ENCODE measurements at regions of chr18 and their contacts with region 1.

Region 1: GRCh38 chr18:23586249-23587196 is at the start of gene NPC1:
- DNase-seq: peak; percentile 92
- H3K4me3 Mint-ChIP-seq: peak within 1 kb of the TSS; percentile 94
- H3K27ac Mint-ChIP-seq: peak within 1 kb of the TSS; percentile 93
- H3K4me1 Mint-ChIP-seq: peaks cover 42% of the 10 kb centered on the region
- H3K27me3 Mint-ChIP-seq: peaks cover 3% of the 10 kb centered on the region
- total RNA-seq, gene NPC1: 30.1 and 30.2 TPM in 2 replicates

Region 2: DNA sequence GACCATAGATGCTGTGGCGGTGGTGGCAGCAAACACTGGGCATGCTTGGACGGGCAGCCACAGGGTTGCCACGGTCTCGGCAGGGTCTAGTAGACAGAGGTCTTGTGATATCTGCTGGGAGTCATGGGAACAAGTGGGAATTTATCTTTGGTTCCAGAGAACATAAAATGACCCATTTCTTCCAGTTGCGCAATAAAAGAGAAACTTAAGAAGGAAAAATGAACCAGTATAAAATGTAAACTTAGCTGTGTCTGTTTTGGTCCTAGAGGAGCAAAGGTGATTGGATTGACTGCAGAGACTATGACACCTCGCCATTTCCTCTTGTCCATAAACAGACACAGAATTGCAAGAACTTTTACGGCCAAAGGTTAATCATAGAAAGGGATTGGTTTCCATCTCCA is 786.0 kb before region 1 on chr18:
- intact Hi-C with region 1: loop called (anchors 2 kb)
- DNase-seq: no peak
- H3K4me3 Mint-ChIP-seq: no peak overlapping the region
- H3K27ac Mint-ChIP-seq: no peak overlapping the region
- H3K4me1 Mint-ChIP-seq: no peaks in the 10 kb centered on the region
- H3K27me3 Mint-ChIP-seq: peaks cover 17% of the 10 kb centered on the region

Region 3: DNA sequence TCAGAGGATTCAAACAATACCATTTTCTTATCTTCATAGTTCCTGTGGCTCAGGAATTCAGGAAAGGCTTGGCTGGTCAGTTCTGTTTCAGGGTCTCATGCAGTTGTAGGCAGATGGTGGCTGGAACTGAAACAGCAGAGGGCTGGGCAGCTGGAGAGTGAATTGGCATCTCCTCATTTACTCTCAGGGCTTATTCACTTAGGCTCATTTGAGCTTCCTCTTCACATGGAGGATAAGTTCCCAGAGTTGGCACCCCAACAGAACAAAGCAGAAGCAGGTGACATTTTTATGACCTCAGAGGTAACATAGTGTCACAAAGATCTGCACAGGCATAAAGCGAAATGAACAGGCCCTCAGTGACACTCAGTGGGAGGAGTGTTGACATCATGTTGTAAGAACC is 587.3 kb before region 1 on chr18:
- intact Hi-C with region 1: no loop called
- DNase-seq: no peak
- H3K4me3 Mint-ChIP-seq: no peak overlapping the region
- H3K27ac Mint-ChIP-seq: no peak overlapping the region
- H3K4me1 Mint-ChIP-seq: peaks cover 7% of the 10 kb centered on the region
- H3K27me3 Mint-ChIP-seq: no peaks in the 10 kb centered on the region

Region 4: GRCh38 chr18:23437357-23438045 is 149.0 kb before region 1 on chr18:
- intact Hi-C with region 1: loop called (anchors 5 kb)
- DNase-seq: peak; percentile 74
- H3K4me3 Mint-ChIP-seq: peak overlapping the region; percentile 86
- H3K27ac Mint-ChIP-seq: peak overlapping the region; percentile 44
- H3K4me1 Mint-ChIP-seq: peaks cover 22% of the 10 kb centered on the region
- H3K27me3 Mint-ChIP-seq: peaks cover 2% of the 10 kb centered on the region

Region 5: DNA sequence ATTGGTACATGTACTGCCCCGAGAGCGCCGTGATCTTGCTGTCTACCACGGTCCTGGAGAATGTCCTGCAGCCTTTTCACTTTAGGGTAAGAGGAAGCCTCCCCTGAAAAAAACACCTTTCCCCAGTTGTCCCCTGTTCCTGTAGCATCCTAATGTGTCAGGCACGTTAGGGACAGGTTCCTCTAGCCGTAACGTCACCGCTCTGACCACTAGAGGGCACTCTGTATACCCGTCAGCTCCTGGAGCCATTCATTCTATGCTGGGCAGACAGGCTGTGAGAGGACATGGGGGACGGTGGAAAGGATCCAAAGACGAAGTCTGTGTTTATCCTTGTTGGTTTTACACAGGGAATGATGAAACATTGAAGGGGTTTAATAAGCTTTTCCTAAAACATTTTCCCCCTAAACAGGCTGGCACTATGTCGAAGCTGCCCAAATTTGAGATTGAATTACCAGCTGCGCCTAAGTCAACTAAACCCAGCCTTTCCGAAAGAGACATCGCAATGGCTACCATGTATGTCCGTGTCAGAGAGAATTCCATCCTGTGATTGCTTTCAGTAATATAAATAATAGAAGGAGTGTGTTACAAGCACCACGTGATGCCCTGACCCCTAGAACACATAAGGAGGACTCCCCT is 70.5 kb before region 1 on chr18:
- intact Hi-C with region 1: loop called (anchors 1 kb)
- DNase-seq: peak; percentile 61
- H3K4me3 Mint-ChIP-seq: no peak overlapping the region
- H3K27ac Mint-ChIP-seq: peak overlapping the region; percentile 3
- H3K4me1 Mint-ChIP-seq: peaks cover 35% of the 10 kb centered on the region
- H3K27me3 Mint-ChIP-seq: no peaks in the 10 kb centered on the region

Region 6: DNA sequence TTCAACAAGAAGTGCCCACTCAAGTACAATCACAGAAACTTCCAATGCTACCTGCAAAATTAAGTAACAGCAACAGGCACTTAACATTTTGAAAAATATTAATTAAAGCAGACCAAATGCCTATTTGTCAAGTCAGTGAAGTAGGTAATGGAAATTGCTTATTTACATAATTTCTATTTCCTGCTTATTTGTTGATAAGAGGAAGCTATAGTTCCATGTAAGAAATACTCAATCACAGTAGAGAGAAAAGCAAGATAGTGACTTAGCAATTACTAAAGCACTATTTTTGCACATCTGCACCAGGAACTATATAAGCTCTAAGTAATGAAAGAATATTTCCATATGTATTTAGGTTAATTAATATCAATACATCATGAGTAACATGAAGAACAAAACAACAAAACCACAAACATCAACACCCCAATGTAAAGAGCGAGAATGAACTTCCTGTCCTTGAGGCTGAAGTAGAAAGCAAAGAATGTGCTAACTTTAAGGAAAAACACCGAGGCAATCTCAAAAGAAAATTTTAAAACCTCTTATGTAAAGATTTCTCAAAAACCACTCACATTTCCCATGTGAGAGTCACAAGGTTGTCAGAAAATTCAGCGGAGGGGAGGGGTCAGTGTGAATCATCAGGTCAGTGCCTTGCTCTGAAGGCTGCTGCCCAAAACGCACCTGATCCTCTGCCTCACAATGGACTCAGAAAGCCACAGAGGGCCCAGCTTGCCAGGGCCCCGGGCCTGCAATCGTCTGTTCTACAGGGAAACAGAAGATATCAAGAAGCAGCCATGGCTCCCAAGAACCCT is 12.7 kb before region 1 on chr18:
- intact Hi-C with region 1: loop called (anchors 1 kb)
- DNase-seq: peak; percentile 27
- H3K4me3 Mint-ChIP-seq: peak overlapping the region; percentile 63
- H3K27ac Mint-ChIP-seq: peak overlapping the region; percentile 89
- H3K4me1 Mint-ChIP-seq: peaks cover 49% of the 10 kb centered on the region
- H3K27me3 Mint-ChIP-seq: no peaks in the 10 kb centered on the region

Region 7: GRCh38 chr18:23949863-23950262 is 363.3 kb after region 1 on chr18:
- intact Hi-C with region 1: no loop called
- DNase-seq: no peak
- H3K4me3 Mint-ChIP-seq: no peak overlapping the region
- H3K27ac Mint-ChIP-seq: no peak overlapping the region
- H3K4me1 Mint-ChIP-seq: peaks cover 5% of the 10 kb centered on the region
- H3K27me3 Mint-ChIP-seq: peaks cover 28% of the 10 kb centered on the region

Region 8: GRCh38 chr18:24118750-24119577 is 532.4 kb after region 1 on chr18:
- intact Hi-C with region 1: loop called (anchors 1 kb)
- DNase-seq: peak; percentile 61
- H3K4me3 Mint-ChIP-seq: no peak overlapping the region
- H3K27ac Mint-ChIP-seq: peak overlapping the region; percentile 44
- H3K4me1 Mint-ChIP-seq: peaks cover 31% of the 10 kb centered on the region
- H3K27me3 Mint-ChIP-seq: no peaks in the 10 kb centered on the region

Measured in activated T-helper 1 cell treated with anti-CD3 and anti-CD28 coated beads, Interleukin-12 subunit alpha, Interleukin-12 subunit beta, Interleukin-2, Interleukin-4 antibody, amounts not matched to agents 30 ng/mL and 10 ng/mL and 1 ng/mL, durations not matched to agents 14 hours and 24 hours and 36 hours (primary cell).